ENCODE measurements at regions of chr5 and their contacts with region 1.

Region 1: GRCh38 chr5:77086689-77087483 is at the start of gene ZBED3:
- DNase-seq: peak; percentile 39 to 56
- ATAC-seq: peak; percentile 77 to 85
- H3K4me3 ChIP-seq: peak within 1 kb of the TSS; percentile 66 to 90 (median 79)
- H3K27ac ChIP-seq: peak within 1 kb of the TSS; percentile 77 to 90 (median 82)
- H3K4me1 ChIP-seq: peaks cover 11 to 18% of the 10 kb centered on the region in 2 donors
- H3K27me3 ChIP-seq: no peaks in the 10 kb centered on the region
- CTCF ChIP-seq: peak in 1 of 5 experiments; percentile 17
- POLR2A ChIP-seq: peak in 1 of 2 donors; percentile 19
- total RNA-seq, gene ZBED3: 0.53 to 1.2 (median 0.94) TPM

Region 2: DNA sequence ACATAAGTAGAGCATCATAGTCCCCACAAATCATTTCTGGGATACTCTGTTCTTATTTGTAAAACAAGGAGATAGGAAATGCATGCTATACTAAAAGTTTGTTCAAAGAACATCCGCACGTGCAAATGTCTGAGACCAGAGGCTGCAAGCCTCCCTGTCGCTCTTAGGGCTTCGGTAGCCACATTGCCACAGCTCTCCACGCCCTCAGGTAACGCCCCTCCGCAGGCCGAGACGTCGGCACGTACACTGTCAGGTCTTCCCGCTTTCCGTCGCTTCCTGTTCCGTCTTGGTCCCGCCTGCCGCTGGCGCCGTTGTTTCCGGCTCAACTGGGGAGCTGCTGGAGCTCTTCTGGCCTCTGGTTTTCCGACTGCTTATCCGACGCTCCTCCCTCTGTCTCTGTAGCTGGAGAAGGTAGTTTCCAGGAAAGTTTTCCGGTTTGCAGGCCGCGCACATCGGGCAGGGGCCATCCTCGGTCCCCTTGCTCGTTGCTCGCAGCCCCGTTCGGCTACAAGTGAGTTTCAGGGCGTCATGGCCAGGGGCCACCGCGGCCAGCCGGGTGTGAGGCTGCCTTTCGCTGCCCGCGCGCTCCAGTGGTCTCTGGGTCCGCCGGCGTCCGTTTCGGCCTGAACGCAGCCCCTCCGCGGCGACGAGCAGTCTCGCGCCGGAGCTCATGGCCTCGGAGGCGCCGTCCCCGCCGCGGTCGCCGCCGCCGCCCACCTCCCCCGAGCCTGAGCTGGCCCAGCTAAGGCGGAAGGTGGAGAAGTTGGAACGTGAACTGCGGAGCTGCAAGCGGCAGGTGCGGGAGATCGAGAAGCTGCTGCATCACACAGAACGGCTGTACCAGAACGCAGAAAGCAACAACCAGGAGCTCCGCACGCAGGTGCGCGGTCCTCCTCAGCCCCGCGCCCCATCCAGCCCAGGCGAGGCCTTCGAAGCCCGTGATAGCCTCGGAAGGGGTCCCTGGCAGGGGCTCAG is 56.5 kb before region 1 on chr5 and contains the start of gene AGGF1:
- in situ Hi-C with region 1: no loop called
- intact Hi-C with region 1: loop called (anchors 5 kb)
- DNase-seq: peak; percentile 82 to 88
- ATAC-seq: peak; percentile 99
- H3K4me3 ChIP-seq: peak within 1 kb of the TSS; percentile 72 to 95 (median 89)
- H3K27ac ChIP-seq: peak within 1 kb of the TSS; percentile 81 to 90 (median 88)
- H3K4me1 ChIP-seq: peaks cover 16 to 21% of the 10 kb centered on the region in 2 donors
- H3K27me3 ChIP-seq: no peaks in the 10 kb centered on the region
- CTCF ChIP-seq: no peak
- POLR2A ChIP-seq: peak; percentile 31 to 66
- total RNA-seq, gene AGGF1: 16.9 to 25.0 (median 19.8) TPM

Measured in gastrocnemius medialis (tissue), 4 donors.